Natural killer cell (primary cell): ENCODE measurements at regions of chr6 and their contacts with region 1.

Region 1: DNA sequence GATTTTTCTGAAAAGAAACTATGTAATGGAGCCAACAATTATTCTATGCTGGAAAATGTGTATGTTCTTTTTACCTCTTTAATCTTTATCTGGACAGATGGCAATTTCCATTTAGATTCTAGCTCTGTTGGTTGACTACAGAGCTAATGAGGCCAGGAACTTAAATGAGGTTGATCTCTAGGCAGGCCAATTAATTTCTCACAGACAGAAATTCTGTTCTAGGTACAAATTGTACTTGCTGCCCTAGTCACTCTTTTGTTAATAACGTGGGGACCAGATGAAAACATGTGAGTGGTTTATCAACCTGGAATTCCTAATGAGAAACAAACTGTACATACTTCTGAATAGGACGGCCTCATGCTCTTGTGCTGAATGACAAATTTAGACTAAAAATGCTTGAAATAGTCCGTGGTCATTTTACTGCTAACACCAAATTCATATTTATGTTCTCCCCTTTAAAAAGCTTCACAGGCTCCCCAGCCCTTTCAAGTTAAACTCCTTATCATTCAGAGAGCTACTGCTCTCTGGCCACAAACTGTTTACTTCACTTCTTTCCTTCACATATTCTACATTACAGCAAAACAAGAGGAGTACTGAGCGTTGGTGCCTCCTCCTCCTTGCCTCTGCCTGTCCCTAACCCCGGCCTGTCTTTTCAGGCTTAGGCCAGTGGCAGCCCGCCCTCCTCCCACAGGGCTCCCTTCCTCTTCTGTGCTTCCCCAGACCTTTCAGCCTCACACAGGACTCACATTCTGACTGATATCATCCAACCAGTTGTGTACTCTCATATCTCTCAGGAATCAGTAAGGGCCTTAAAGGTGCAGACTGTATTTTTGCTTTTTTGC is 41.4 kb downstream of the DTNBP1 start:
- DNase-seq: no peak
- ATAC-seq: peak in 2 of 3 donors; percentile 53 to 67
- H3K4me3 ChIP-seq: no peak overlapping the region
- H3K4me3 Mint-ChIP-seq: no peak overlapping the region
- H3K27ac ChIP-seq: peak overlapping the region; percentile 34
- H3K27ac Mint-ChIP-seq: peak overlapping the region in 1 of 2 donors; percentile 84
- H3K4me1 ChIP-seq: peaks cover 6% of the 10 kb centered on the region
- H3K4me1 Mint-ChIP-seq: peaks cover 37 to 51% of the 10 kb centered on the region in 2 donors
- H3K27me3 ChIP-seq: no peaks in the 10 kb centered on the region
- H3K27me3 Mint-ChIP-seq: no peaks in the 10 kb centered on the region
- CTCF ChIP-seq: no peak

Region 2: DNA sequence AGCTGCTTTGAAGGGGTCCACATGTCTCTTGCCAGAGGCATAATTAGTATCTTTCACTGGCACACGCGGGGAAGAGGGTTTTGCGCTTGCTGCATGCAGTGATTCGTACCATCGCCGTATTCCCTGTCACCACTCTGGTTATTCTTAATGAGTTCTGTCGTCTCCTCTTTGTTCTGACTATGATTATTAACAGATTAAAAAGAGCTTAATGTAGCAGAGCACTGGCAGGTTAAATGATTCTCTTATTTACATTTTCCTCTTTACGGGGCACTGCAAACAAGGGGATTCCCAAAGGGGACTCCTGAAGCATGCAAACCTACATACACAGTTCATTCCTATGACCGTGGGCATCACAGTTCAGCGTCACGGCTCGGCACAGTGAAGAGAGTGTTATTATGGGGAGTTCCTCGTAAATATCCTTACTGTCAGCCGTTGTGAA is 163.4 kb before region 1 on chr6:
- intact Hi-C with region 1: no loop called
- DNase-seq: no peak
- ATAC-seq: no peak
- H3K4me3 ChIP-seq: no peak overlapping the region
- H3K4me3 Mint-ChIP-seq: no peak overlapping the region
- H3K27ac ChIP-seq: no peak overlapping the region
- H3K27ac Mint-ChIP-seq: no peak overlapping the region
- H3K4me1 ChIP-seq: no peaks in the 10 kb centered on the region
- H3K4me1 Mint-ChIP-seq: peaks cover 71 to 84% of the 10 kb centered on the region in 2 donors
- H3K27me3 ChIP-seq: no peaks in the 10 kb centered on the region
- H3K27me3 Mint-ChIP-seq: no peaks in the 10 kb centered on the region
- CTCF ChIP-seq: no peak

Region 3: GRCh38 chr6:15491255-15491985 is 130.0 kb before region 1 on chr6:
- intact Hi-C with region 1: loop called (anchors 1 kb)
- DNase-seq: peak; percentile 58 to 80
- ATAC-seq: peak; percentile 83 to 94 (median 84)
- H3K4me3 ChIP-seq: no peak overlapping the region
- H3K4me3 Mint-ChIP-seq: no peak overlapping the region
- H3K27ac ChIP-seq: no peak overlapping the region
- H3K27ac Mint-ChIP-seq: peak overlapping the region; percentile 53 to 75
- H3K4me1 ChIP-seq: peaks cover 18% of the 10 kb centered on the region
- H3K4me1 Mint-ChIP-seq: peaks cover 49 to 59% of the 10 kb centered on the region in 2 donors
- H3K27me3 ChIP-seq: no peaks in the 10 kb centered on the region
- H3K27me3 Mint-ChIP-seq: no peaks in the 10 kb centered on the region
- CTCF ChIP-seq: peak; percentile 83

Region 4: GRCh38 chr6:15504581-15505350 is 116.7 kb before region 1 on chr6:
- intact Hi-C with region 1: loop called (anchors 5 kb)
- DNase-seq: no peak
- ATAC-seq: no peak
- H3K4me3 ChIP-seq: no peak overlapping the region
- H3K4me3 Mint-ChIP-seq: peak overlapping the region; percentile 64
- H3K27ac ChIP-seq: no peak overlapping the region
- H3K27ac Mint-ChIP-seq: peak overlapping the region; percentile 29 to 70
- H3K4me1 ChIP-seq: peaks cover 24% of the 10 kb centered on the region
- H3K4me1 Mint-ChIP-seq: peaks cover 55 to 68% of the 10 kb centered on the region in 2 donors
- H3K27me3 ChIP-seq: no peaks in the 10 kb centered on the region
- H3K27me3 Mint-ChIP-seq: no peaks in the 10 kb centered on the region
- CTCF ChIP-seq: no peak

Region 5: DNA sequence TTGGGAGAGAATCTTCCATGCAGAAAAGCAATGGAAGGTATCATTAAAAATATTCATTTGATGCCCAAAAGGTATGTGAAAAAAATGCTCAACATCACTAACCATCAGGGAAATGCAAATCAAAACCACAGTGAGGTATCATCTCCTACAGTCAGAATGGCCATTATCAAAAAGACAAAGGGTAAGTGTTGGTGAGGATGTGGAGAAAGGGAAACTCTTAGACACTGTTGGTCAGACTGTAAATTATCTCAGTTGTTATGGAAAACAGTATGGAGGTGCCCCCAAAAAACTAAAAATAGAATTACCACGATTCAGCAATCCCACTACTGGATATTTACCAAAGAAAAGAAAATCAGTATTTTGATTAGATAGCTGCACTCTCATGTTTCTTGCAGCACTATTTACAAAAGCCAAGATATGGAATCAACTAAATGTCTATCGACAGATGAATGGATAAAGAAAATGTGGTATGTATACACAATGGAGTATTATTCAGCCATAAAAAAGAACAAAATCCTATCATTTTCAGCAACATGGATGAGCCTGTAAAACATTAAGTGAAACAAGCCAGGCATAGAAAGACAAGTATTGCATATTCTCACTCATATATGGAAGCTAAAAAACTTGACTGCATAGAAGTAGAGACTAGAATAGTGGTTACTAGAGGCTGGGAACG is 42.6 kb before region 1 on chr6:
- intact Hi-C with region 1: no loop called
- DNase-seq: no peak
- ATAC-seq: no peak
- H3K4me3 ChIP-seq: no peak overlapping the region
- H3K4me3 Mint-ChIP-seq: no peak overlapping the region
- H3K27ac ChIP-seq: no peak overlapping the region
- H3K27ac Mint-ChIP-seq: no peak overlapping the region
- H3K4me1 ChIP-seq: no peaks in the 10 kb centered on the region
- H3K4me1 Mint-ChIP-seq: peaks cover 43 to 61% of the 10 kb centered on the region in 2 donors
- H3K27me3 ChIP-seq: no peaks in the 10 kb centered on the region
- H3K27me3 Mint-ChIP-seq: no peaks in the 10 kb centered on the region
- CTCF ChIP-seq: no peak

Region 6: GRCh38 chr6:15602154-15602553 is 19.3 kb before region 1 on chr6:
- intact Hi-C with region 1: no loop called
- DNase-seq: peak in 1 of 2 donors; percentile 38
- ATAC-seq: no peak
- H3K4me3 ChIP-seq: no peak overlapping the region
- H3K4me3 Mint-ChIP-seq: no peak overlapping the region
- H3K27ac ChIP-seq: no peak overlapping the region
- H3K27ac Mint-ChIP-seq: peak overlapping the region in 1 of 2 donors; percentile 58
- H3K4me1 ChIP-seq: peaks cover 4% of the 10 kb centered on the region
- H3K4me1 Mint-ChIP-seq: peaks cover 22 to 46% of the 10 kb centered on the region in 2 donors
- H3K27me3 ChIP-seq: no peaks in the 10 kb centered on the region
- H3K27me3 Mint-ChIP-seq: no peaks in the 10 kb centered on the region
- CTCF ChIP-seq: no peak